Gastrocnemius medialis (tissue), 4 donors: ENCODE measurements at regions of chr15 and their contacts with region 1.

Region 1: GRCh38 chr15:91022075-91022835 is at the start of gene VPS33B:
- DNase-seq: peak; percentile 70 to 73
- ATAC-seq: peak; percentile 93 to 96
- H3K4me3 ChIP-seq: peak within 1 kb of the TSS; percentile 74 to 98 (median 96)
- H3K27ac ChIP-seq: peak within 1 kb of the TSS; percentile 68 to 83 (median 72)
- H3K4me1 ChIP-seq: peaks cover 18 to 26% of the 10 kb centered on the region in 2 donors
- H3K27me3 ChIP-seq: no peaks in the 10 kb centered on the region
- CTCF ChIP-seq: no peak
- POLR2A ChIP-seq: peak in 1 of 2 donors; percentile 15
- total RNA-seq, gene VPS33B: 3.3 to 7.7 (median 4.3) TPM

Region 2: GRCh38 chr15:90967206-90967605 is 55.0 kb before region 1 on chr15:
- in situ Hi-C with region 1: loop called in 1 of 4 experiments (anchors 5 kb)
- intact Hi-C with region 1: no loop called
- DNase-seq: no peak
- ATAC-seq: no peak
- H3K4me3 ChIP-seq: no peak overlapping the region
- H3K27ac ChIP-seq: no peak overlapping the region
- H3K4me1 ChIP-seq: no peaks in the 10 kb centered on the region
- H3K27me3 ChIP-seq: no peaks in the 10 kb centered on the region
- CTCF ChIP-seq: no peak
- POLR2A ChIP-seq: no peak

Region 3: GRCh38 chr15:90994417-90995311 is 27.6 kb before region 1 on chr15 and contains the start of gene PRC1:
- in situ Hi-C with region 1: no loop called
- intact Hi-C with region 1: loop called (anchors 2 kb)
- DNase-seq: peak; percentile 97 to 98
- ATAC-seq: peak; percentile 98
- H3K4me3 ChIP-seq: peak within 1 kb of the TSS; percentile 77 to 99 (median 87)
- H3K27ac ChIP-seq: peak within 1 kb of the TSS; percentile 75 to 86 (median 82)
- H3K4me1 ChIP-seq: peaks cover 0 to 13% of the 10 kb centered on the region in 2 donors
- H3K27me3 ChIP-seq: no peaks in the 10 kb centered on the region
- CTCF ChIP-seq: no peak
- POLR2A ChIP-seq: peak; percentile 48 to 68
- total RNA-seq, gene PRC1: 1.4 to 9.9 (median 4.9) TPM